ENCODE measurements at regions of chr1 and their contacts with region 1.

Region 1: GRCh38 chr1:36149237-36149972 is at the start of gene TRAPPC3:
- DNase-seq: peak; percentile 99 to 100 (median 99)
- H3K4me3 ChIP-seq: peak within 1 kb of the TSS; percentile 66
- H3K4me3 Mint-ChIP-seq: peak within 1 kb of the TSS; percentile 95 to 100 (median 99)
- H3K27ac ChIP-seq: peak within 1 kb of the TSS; percentile 87
- H3K27ac Mint-ChIP-seq: peak within 1 kb of the TSS; percentile 98 to 100 (median 99)
- H3K4me1 ChIP-seq: peaks cover 56% of the 10 kb centered on the region
- H3K4me1 Mint-ChIP-seq: peaks cover 65 to 81% (median 73%) of the 10 kb centered on the region in 3 donors
- H3K27me3 ChIP-seq: no peaks in the 10 kb centered on the region
- H3K27me3 Mint-ChIP-seq: peaks cover 0 to 1% of the 10 kb centered on the region in 2 donors
- total RNA-seq, gene TRAPPC3: 61.7 to 63.1 TPM

Region 2: GRCh38 chr1:36099681-36100341 is 49.6 kb before region 1 on chr1:
- CTCF ChIA-PET with region 1: interaction called, 13 read pairs
- POLR2A ChIA-PET with region 1: no interaction called
- DNase-seq: peak; percentile 58 to 83 (median 72)
- H3K4me3 ChIP-seq: no peak overlapping the region
- H3K4me3 Mint-ChIP-seq: peak overlapping the region in 2 of 7 donors; percentile 39 to 54
- H3K27ac ChIP-seq: no peak overlapping the region
- H3K27ac Mint-ChIP-seq: peak overlapping the region in 3 of 8 donors; percentile 29 to 90 (median 71)
- H3K4me1 ChIP-seq: no peaks in the 10 kb centered on the region
- H3K4me1 Mint-ChIP-seq: peaks cover 0 to 7% (median 4%) of the 10 kb centered on the region in 3 donors
- H3K27me3 ChIP-seq: no peaks in the 10 kb centered on the region
- H3K27me3 Mint-ChIP-seq: no peaks in the 10 kb centered on the region

Region 3: GRCh38 chr1:36160949-36161485 is 11.6 kb after region 1 on chr1:
- CTCF ChIA-PET with region 1: interaction called, 79 read pairs
- POLR2A ChIA-PET with region 1: interaction called, 43 read pairs
- DNase-seq: peak; percentile 45 to 77 (median 66)
- H3K4me3 ChIP-seq: peak overlapping the region; percentile 78
- H3K4me3 Mint-ChIP-seq: peak overlapping the region; percentile 81 to 90 (median 85)
- H3K27ac ChIP-seq: peak overlapping the region; percentile 87
- H3K27ac Mint-ChIP-seq: peak overlapping the region; percentile 90 to 99 (median 95)
- H3K4me1 ChIP-seq: peaks cover 75% of the 10 kb centered on the region
- H3K4me1 Mint-ChIP-seq: peaks cover 74 to 79% (median 78%) of the 10 kb centered on the region in 3 donors
- H3K27me3 ChIP-seq: no peaks in the 10 kb centered on the region
- H3K27me3 Mint-ChIP-seq: no peaks in the 10 kb centered on the region

Region 4: DNA sequence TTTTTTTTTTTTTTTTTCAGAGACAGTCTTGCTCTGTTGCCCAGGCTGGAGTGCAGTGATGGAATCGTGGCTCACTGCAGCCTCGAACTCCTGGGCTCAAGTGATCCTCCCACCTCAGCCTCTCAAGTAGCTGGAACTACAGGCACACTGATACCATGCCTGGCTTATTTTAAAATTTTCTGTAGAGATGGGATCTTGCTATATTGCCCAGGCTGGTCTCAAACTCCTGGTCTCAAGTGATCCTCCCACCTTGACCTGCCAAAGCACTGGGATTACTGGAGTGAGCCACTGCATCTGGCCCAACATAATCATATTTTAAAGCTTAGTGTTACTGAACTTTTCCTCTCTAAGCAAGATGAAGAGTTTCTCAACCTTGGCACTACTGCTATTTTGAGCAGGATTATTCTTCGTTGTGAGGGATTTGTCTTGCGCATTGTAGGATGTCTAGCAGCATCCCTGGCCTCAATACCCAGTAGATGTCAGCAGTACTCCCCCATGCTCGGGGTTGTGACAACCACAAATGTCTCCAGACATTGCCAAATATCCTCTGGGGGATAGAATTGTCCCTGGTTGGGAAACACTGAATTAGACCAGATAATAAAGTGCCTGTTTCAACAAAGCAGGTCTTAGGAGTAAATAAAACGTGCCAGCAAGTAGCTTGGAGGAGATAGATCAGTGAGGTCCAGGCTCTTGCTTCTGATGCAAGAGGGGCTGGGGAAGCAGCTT is 59.7 kb after region 1 on chr1:
- CTCF ChIA-PET with region 1: no interaction called
- POLR2A ChIA-PET with region 1: no interaction called
- DNase-seq: no peak
- H3K4me3 ChIP-seq: no peak overlapping the region
- H3K4me3 Mint-ChIP-seq: no peak overlapping the region
- H3K27ac ChIP-seq: no peak overlapping the region
- H3K27ac Mint-ChIP-seq: no peak overlapping the region
- H3K4me1 ChIP-seq: no peaks in the 10 kb centered on the region
- H3K4me1 Mint-ChIP-seq: no peaks in the 10 kb centered on the region
- H3K27me3 ChIP-seq: no peaks in the 10 kb centered on the region
- H3K27me3 Mint-ChIP-seq: no peaks in the 10 kb centered on the region

Region 5: DNA sequence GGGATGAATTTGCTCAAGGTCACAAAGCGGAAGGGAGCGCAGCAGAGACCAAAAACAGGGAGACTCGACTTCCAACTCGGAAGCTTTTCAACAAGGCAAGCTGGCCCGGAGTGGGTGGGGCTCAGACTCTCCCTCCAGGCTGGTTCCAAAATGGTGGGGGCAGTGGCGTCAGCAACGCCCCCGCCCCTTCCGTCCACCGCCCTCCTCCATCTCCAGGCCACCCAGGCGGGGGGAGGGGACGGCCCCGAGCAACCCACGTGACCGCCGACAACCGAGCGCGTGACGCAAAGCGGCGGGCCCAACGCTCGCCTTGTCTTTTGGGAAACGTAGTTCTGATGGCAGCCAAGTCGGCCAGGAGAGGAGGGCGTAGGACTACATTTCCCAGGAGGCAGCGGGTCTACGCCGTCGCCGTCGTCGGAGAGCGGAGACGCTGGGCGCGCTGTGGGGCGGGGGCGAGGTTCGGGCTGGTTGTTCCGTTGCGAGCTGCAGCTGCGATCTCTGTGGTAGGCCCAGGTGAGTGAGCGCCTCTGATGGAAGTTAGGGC is 74.7 kb after region 1 on chr1 and contains the start of gene THRAP3:
- CTCF ChIA-PET with region 1: interaction called, 17 read pairs
- POLR2A ChIA-PET with region 1: interaction called, 34 read pairs
- DNase-seq: peak; percentile 99 to 100 (median 100)
- H3K4me3 ChIP-seq: peak within 1 kb of the TSS; percentile 88
- H3K4me3 Mint-ChIP-seq: peak within 1 kb of the TSS; percentile 89 to 99 (median 96)
- H3K27ac ChIP-seq: peak within 1 kb of the TSS; percentile 96
- H3K27ac Mint-ChIP-seq: peak within 1 kb of the TSS; percentile 97 to 100 (median 100)
- H3K4me1 ChIP-seq: peaks cover 36% of the 10 kb centered on the region
- H3K4me1 Mint-ChIP-seq: peaks cover 28 to 46% (median 36%) of the 10 kb centered on the region in 3 donors
- H3K27me3 ChIP-seq: no peaks in the 10 kb centered on the region
- H3K27me3 Mint-ChIP-seq: peaks cover 0 to 4% of the 10 kb centered on the region in 2 donors
- total RNA-seq, gene THRAP3: 167 to 168 TPM

Region 6: GRCh38 chr1:36285448-36286101 is 136.2 kb after region 1 on chr1:
- CTCF ChIA-PET with region 1: interaction called, 31 read pairs
- POLR2A ChIA-PET with region 1: interaction called, 6 read pairs
- DNase-seq: peak; percentile 49 to 76 (median 61)
- H3K4me3 ChIP-seq: no peak overlapping the region
- H3K4me3 Mint-ChIP-seq: no peak overlapping the region
- H3K27ac ChIP-seq: no peak overlapping the region
- H3K27ac Mint-ChIP-seq: peak overlapping the region in 7 of 8 donors; percentile 30 to 87 (median 72)
- H3K4me1 ChIP-seq: peaks cover 5% of the 10 kb centered on the region
- H3K4me1 Mint-ChIP-seq: peaks cover 14 to 24% (median 15%) of the 10 kb centered on the region in 3 donors
- H3K27me3 ChIP-seq: no peaks in the 10 kb centered on the region
- H3K27me3 Mint-ChIP-seq: no peaks in the 10 kb centered on the region